Testis (tissue), 5 donors: ENCODE measurements at regions of chr11 and their contacts with region 1.

Region 1: DNA sequence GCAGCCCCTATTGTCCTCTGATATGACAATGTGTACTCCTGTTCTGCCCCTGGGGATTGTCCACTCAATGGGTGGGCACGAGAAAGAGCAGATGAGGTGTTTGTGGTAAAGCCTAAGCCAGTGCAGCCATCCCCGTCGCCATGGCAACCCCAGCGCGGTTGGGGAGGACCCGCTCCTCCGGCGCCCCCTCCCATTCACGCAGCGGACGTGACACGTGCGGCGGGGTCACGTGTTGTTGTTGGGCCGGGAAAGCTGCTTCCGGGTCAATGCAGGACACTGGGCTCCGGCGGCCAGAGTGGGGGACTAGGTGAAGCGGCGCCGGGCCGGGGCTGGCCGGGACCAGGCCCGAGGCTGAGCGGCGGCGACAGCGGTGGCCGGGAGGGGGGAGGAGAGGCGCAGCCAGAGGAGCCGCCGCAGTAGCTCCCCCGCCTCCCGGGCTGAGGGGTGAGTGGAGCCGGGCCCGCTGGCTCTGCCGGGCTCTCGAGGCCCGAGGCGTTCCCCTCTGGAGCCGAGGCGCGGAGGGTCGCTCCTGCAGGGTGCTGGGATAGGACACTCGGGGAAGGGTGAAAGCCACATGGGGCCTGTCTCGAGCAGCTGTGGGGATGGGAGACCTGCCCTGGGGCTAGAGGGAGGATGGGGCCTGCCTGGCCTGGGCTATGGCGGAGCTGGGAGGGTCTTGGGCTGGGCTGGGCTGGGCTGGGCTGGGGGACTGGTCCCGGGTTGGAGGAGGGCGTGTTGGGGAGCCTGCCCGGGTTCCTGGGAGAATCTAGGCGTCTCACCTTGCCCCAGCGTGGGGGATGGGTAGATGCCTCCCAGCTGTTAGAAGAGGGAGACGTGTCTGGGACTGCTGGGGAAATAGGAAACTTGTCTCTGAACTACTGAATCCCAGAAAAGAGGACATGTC is at the start of gene TBCEL:
- DNase-seq: peak; percentile 97
- H3K4me3 ChIP-seq: peak within 1 kb of the TSS; percentile 71 to 77
- H3K27ac ChIP-seq: peak within 1 kb of the TSS; percentile 75 to 78
- H3K4me1 ChIP-seq: peaks cover 15% of the 10 kb centered on the region
- H3K27me3 ChIP-seq: no peaks in the 10 kb centered on the region
- CTCF ChIP-seq: no peak
- POLR2A ChIP-seq: no peak
- total RNA-seq, gene TBCEL: 42.7 to 42.9 TPM

Region 2: GRCh38 chr11:120925944-120926343 is 98.2 kb before region 1 on chr11:
- intact Hi-C with region 1: no loop called
- DNase-seq: no peak
- H3K4me3 ChIP-seq: no peak overlapping the region
- H3K27ac ChIP-seq: no peak overlapping the region
- H3K4me1 ChIP-seq: no peaks in the 10 kb centered on the region
- H3K27me3 ChIP-seq: no peaks in the 10 kb centered on the region
- CTCF ChIP-seq: no peak
- POLR2A ChIP-seq: no peak

Region 3: DNA sequence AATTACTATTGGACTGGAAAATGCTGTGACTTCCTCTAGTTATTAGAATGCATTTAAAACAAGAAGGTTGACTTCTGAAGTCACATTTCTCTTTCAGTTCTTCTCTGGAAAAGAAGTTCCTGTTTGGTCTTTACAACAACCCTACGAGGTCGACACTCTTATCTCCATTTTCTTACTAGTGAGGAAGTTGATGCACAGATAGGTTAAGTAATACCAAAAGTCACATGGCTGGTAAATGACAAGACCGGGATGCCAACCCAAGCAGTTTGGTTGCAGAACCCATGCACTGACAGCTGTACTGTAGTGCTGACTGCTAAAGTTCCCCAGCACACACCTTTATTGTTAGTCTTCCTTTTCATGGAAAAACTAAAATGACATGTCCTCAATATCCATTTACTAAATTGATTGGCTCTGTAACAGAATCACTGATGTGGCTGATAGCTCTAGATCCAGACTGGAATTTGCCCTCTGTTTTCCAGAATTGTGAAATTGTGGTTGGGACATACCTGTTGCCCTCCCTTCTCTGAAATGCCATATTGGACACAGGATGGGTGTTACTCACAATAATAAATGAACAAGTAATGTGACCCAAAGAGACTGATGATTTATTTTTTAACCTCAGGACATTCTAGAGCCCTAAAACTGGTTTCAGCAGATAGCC is 67.5 kb after region 1 on chr11:
- intact Hi-C with region 1: no loop called
- DNase-seq: no peak
- H3K4me3 ChIP-seq: no peak overlapping the region
- H3K27ac ChIP-seq: no peak overlapping the region
- H3K4me1 ChIP-seq: no peaks in the 10 kb centered on the region
- H3K27me3 ChIP-seq: no peaks in the 10 kb centered on the region
- CTCF ChIP-seq: no peak
- POLR2A ChIP-seq: no peak

Region 4: GRCh38 chr11:121104312-121104762 is 80.2 kb after region 1 on chr11:
- intact Hi-C with region 1: loop called (anchors 10 kb)
- DNase-seq: peak; percentile 75
- H3K4me3 ChIP-seq: no peak overlapping the region
- H3K27ac ChIP-seq: peak overlapping the region in 1 of 2 donors; percentile 20
- H3K4me1 ChIP-seq: peaks cover 22% of the 10 kb centered on the region
- H3K27me3 ChIP-seq: no peaks in the 10 kb centered on the region
- CTCF ChIP-seq: peak in 1 of 3 experiments; percentile 12
- POLR2A ChIP-seq: no peak